ENCODE measurements at regions of chr14 and their contacts with region 1.

Region 1: DNA sequence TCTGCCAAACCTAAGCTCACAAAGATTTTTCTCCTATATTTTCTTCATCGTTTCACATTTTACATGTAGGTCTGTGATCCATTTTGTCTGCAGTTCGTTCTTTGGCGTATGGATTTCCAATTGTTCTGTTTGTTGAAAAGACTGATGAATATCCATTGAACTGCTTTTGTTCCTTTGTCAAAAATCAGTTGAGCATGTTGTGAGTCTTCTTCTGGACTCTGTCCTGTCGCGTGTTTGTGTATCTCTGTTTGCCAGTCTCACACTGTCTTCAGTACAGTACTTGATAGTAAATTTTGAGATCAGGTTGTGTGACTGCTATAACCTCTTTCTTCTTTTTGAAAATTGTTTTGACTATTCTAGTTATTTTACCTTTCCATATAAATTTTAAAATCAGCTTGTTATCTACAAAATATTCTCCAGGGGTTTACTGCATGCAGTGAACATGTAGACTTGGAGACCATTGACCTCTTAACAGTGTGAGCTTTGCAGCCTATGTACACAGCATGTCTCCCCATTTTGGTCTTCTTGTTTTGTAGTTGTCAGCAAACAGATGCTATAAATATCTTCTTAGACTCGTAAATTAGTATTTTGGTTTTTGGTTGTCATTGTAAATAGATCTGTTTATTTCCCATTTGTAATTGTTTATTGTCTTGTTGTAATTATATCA is 94.0 kb upstream of the DYNC1H1 start:
- DNase-seq: no peak
- ATAC-seq: no peak
- H3K4me3 ChIP-seq: no peak overlapping the region
- H3K4me3 Mint-ChIP-seq: no peak overlapping the region
- H3K27ac ChIP-seq: no peak overlapping the region
- H3K27ac Mint-ChIP-seq: peak overlapping the region in 1 of 2 donors; percentile 5
- H3K4me1 ChIP-seq: peaks cover 4 to 37% of the 10 kb centered on the region in 2 experiments
- H3K4me1 Mint-ChIP-seq: peaks cover 71 to 81% (median 78%) of the 10 kb centered on the region in 3 donors
- H3K27me3 ChIP-seq: no peaks in the 10 kb centered on the region
- H3K27me3 Mint-ChIP-seq: no peaks in the 10 kb centered on the region

Region 2: DNA sequence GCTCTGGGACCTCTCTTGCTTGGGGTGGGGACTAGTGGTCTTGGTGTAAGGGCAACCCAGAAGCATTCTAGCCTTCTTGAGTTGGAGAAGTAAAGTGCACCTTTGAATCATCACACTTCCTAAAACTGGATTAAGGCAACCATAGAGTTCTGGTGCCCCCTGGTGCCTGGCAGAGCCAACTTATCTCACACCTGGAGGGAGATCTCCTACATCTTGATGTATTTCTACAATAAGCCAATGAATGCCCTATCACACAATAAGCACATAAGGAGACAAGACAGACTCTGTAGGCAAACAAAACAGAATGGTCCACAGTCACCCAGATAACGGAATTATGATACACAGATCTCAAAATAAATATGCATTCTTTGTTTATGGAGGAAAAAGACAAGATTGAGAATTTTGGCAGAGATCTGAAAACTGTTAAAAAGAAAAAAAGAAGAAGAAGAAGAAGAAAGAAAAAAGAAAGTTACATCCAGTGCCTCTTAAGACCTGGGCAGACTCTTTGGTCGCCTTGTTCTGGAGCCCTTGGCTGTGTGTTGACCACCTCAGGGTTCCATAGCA is 204.8 kb before region 1 on chr14:
- CTCF ChIA-PET with region 1: no interaction called
- POLR2A ChIA-PET with region 1: no interaction called
- DNase-seq: peak in 17 of 35 experiments; percentile 2 to 42 (median 10)
- ATAC-seq: peak in 1 of 4 experiments; percentile 16
- H3K4me3 ChIP-seq: no peak overlapping the region
- H3K4me3 Mint-ChIP-seq: no peak overlapping the region
- H3K27ac ChIP-seq: no peak overlapping the region
- H3K27ac Mint-ChIP-seq: no peak overlapping the region
- H3K4me1 ChIP-seq: no peaks in the 10 kb centered on the region
- H3K4me1 Mint-ChIP-seq: no peaks in the 10 kb centered on the region
- H3K27me3 ChIP-seq: peaks cover 0 to 27% of the 10 kb centered on the region in 2 experiments
- H3K27me3 Mint-ChIP-seq: peaks cover 37 to 39% of the 10 kb centered on the region in 2 donors

Region 3: GRCh38 chr14:101797856-101798255 is 72.5 kb before region 1 on chr14:
- CTCF ChIA-PET with region 1: interaction called in 1 of 2 experiments, 5 read pairs
- POLR2A ChIA-PET with region 1: interaction called in 1 of 2 experiments, 12 read pairs
- DNase-seq: no peak
- ATAC-seq: no peak
- H3K4me3 ChIP-seq: no peak overlapping the region
- H3K4me3 Mint-ChIP-seq: no peak overlapping the region
- H3K27ac ChIP-seq: no peak overlapping the region
- H3K27ac Mint-ChIP-seq: no peak overlapping the region
- H3K4me1 ChIP-seq: peaks cover 0 to 6% of the 10 kb centered on the region in 2 experiments
- H3K4me1 Mint-ChIP-seq: peaks cover 0 to 17% (median 2%) of the 10 kb centered on the region in 3 donors
- H3K27me3 ChIP-seq: no peaks in the 10 kb centered on the region
- H3K27me3 Mint-ChIP-seq: no peaks in the 10 kb centered on the region

Region 4: GRCh38 chr14:101917413-101918017 is 47.1 kb after region 1 on chr14:
- CTCF ChIA-PET with region 1: no interaction called
- POLR2A ChIA-PET with region 1: no interaction called
- DNase-seq: no peak
- ATAC-seq: no peak
- H3K4me3 ChIP-seq: no peak overlapping the region
- H3K4me3 Mint-ChIP-seq: no peak overlapping the region
- H3K27ac ChIP-seq: no peak overlapping the region
- H3K27ac Mint-ChIP-seq: peak overlapping the region; percentile 28 to 66
- H3K4me1 ChIP-seq: no peaks in the 10 kb centered on the region
- H3K4me1 Mint-ChIP-seq: peaks cover 0 to 13% (median 2%) of the 10 kb centered on the region in 3 donors
- H3K27me3 ChIP-seq: no peaks in the 10 kb centered on the region
- H3K27me3 Mint-ChIP-seq: no peaks in the 10 kb centered on the region

Region 5: DNA sequence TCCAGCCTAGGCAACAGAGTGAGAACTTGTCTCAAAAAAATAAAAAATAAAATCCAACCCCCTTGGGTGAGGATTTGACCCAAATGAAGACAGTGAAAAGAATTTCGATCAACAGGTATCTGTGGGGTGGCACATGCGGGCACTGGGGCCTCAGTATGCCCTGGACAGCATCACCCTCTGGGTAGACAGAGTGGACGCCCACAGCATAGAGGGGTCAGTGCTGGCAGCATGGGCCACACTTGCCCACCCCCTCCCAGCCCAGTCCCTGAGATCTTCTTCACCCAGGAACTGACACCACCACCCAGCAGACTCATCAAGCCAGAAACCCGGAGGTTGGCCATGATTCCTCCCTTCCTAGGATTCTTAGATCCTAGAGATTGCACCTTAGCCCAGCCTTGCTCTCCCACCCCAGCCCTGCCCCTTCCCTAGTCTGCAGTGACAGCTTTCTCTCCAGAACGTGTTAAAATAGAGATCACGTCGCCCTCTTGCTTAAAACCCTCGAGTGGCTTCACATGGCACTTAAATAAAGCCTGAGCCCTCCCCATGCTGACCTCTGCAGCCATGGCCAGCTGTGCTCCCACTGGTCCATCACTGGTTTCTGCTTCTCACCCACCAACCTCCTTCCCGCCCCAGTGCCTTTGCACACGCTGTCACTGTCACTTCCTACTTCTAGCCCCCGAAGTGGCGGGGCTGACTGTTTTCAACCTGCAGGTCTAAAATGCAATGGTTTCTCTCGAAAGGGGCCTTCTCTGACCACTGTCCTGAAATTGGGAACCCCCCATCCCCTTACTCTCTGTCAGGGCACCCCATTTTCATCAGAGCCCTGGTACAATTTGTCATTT is 67.7 kb after region 1 on chr14:
- CTCF ChIA-PET with region 1: no interaction called
- POLR2A ChIA-PET with region 1: no interaction called
- DNase-seq: no peak
- ATAC-seq: no peak
- H3K4me3 ChIP-seq: no peak overlapping the region
- H3K4me3 Mint-ChIP-seq: no peak overlapping the region
- H3K27ac ChIP-seq: no peak overlapping the region
- H3K27ac Mint-ChIP-seq: no peak overlapping the region
- H3K4me1 ChIP-seq: no peaks in the 10 kb centered on the region
- H3K4me1 Mint-ChIP-seq: peaks cover 2 to 7% (median 5%) of the 10 kb centered on the region in 3 donors
- H3K27me3 ChIP-seq: peaks cover 0 to 26% of the 10 kb centered on the region in 2 experiments
- H3K27me3 Mint-ChIP-seq: peaks cover 17 to 34% of the 10 kb centered on the region in 2 donors